ENCODE measurements at regions of chr16 and their contacts with region 1.

Region 1: DNA sequence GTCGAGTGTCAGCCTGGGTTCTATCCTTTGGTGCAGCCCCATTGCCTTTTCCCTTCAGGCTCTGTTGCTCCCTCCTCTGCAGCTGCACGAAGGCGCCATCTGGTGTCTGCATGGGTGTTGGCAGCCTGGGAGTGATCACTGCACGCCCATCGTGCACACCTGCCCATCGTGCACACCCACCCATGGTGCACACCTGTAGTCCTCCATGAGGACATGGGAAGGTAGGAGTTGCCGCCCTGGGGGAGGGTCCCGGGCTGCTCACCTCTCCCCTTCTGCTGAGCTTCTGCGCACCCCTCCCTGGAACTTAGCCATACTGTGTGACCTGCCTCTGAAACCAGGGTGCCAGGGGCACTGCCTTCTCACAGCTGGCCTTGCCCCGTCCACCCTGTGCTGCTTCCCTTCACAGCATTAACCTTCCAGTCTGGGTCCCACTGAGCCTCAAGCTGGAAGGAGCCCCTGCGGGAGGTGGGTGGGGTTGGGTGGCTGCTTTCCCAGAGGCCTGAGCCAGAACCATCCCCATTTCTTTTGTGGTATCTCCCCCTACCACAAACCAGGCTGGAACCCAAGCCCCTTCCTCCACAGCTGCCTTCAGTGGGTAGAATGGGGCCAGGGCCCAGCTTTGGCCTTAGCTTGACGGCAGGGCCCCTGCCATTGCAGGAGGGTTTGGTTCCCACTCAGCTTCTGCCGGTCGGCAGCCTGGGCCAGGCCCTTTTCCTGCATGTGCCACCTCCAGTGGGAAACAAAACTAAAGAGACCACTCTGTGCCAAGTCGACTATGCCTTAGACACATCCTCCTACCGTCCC is 2.9 kb downstream of the CTRL start:
- DNase-seq: no peak

Region 2: GRCh38 chr16:67816240-67817031 is 112.3 kb before region 1 on chr16:
- intact Hi-C with region 1: loop called (anchors 2 kb)
- DNase-seq: peak; percentile 96

Region 3: GRCh38 chr16:67865316-67865715 is 63.4 kb before region 1 on chr16:
- intact Hi-C with region 1: no loop called
- DNase-seq: no peak